Activated B cell treated with CpG ODN at 0.5 μM for 24 hours (primary cell): ENCODE measurements at regions of chr7 and their contacts with region 1.

Region 1: GRCh38 chr7:26078437-26079336 is 73.3 kb upstream of the NFE2L3 start:
- DNase-seq: peak; percentile 73
- ATAC-seq: peak; percentile 100
- H3K4me3 Mint-ChIP-seq: no peak overlapping the region
- H3K27ac Mint-ChIP-seq: no peak overlapping the region
- H3K4me1 Mint-ChIP-seq: peaks cover 7% of the 10 kb centered on the region
- H3K27me3 Mint-ChIP-seq: peaks cover 33% of the 10 kb centered on the region
- CTCF ChIP-seq: no peak

Region 2: DNA sequence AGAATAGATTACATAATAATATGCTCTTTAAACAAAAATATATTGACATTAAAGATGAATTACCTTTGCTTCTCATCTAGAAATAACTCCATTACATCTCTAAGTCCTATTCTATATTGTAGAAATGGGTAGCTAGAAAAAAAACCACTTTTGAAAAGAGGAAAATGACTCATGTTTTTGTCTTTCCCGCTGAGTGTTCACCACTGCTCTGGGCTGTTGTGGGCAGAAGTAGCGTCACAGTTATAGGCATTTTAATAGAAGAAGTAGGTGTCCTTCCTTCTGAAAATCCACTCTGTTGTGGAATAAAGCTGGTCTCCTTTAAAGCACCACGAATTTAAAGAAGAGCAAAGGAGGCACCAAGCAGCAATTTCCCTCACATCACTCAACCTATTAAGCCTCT is 44.3 kb before region 1 on chr7:
- CTCF ChIA-PET with region 1: no interaction called
- POLR2A ChIA-PET with region 1: no interaction called
- intact Hi-C with region 1: no loop called
- DNase-seq: no peak
- ATAC-seq: no peak
- H3K4me3 Mint-ChIP-seq: no peak overlapping the region
- H3K27ac Mint-ChIP-seq: no peak overlapping the region
- H3K4me1 Mint-ChIP-seq: no peaks in the 10 kb centered on the region
- H3K27me3 Mint-ChIP-seq: peaks cover 26% of the 10 kb centered on the region
- CTCF ChIP-seq: no peak

Region 3: DNA sequence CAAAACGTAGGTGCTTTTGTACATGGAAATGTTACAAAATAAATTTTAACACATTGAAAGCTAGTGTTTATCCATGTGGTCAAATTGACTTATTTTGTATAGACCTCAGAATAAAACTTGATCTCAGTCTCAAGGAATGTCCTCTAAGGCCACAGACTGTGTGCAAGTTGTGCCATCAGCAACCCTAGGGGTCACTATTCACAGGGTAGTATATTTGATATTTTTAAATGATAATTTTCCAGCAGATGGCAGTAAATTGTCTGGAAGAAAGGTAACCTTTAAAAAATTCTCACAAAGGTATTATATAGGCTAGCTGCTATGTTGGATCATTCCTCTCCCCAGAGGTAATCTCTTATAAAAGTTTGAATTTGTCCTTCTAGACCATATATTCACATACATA is 200.1 kb after region 1 on chr7:
- CTCF ChIA-PET with region 1: interaction called, 10 read pairs
- POLR2A ChIA-PET with region 1: no interaction called
- intact Hi-C with region 1: no loop called
- DNase-seq: no peak
- ATAC-seq: peak; percentile 82
- H3K4me3 Mint-ChIP-seq: no peak overlapping the region
- H3K27ac Mint-ChIP-seq: no peak overlapping the region
- H3K4me1 Mint-ChIP-seq: peaks cover 11% of the 10 kb centered on the region
- H3K27me3 Mint-ChIP-seq: peaks cover 3% of the 10 kb centered on the region
- CTCF ChIP-seq: no peak